PC-3 (cell line): ENCODE measurements at regions of chr11 and their contacts with region 1.

Region 1: GRCh38 chr11:57644748-57645688 is 4.7 kb downstream of the YPEL4 start:
- DNase-seq: peak; percentile 88
- ATAC-seq: peak; percentile 65
- H3K4me3 ChIP-seq: no peak overlapping the region
- H3K27ac ChIP-seq: no peak overlapping the region
- H3K4me1 ChIP-seq: peaks cover 15% of the 10 kb centered on the region
- H3K27me3 ChIP-seq: peaks cover 29% of the 10 kb centered on the region
- CTCF ChIP-seq: peak; percentile 96

Region 2: GRCh38 chr11:57402188-57403002 is 242.6 kb before region 1 on chr11:
- CTCF ChIA-PET with region 1: no interaction called
- POLR2A ChIA-PET with region 1: no interaction called
- intact Hi-C with region 1: no loop called
- DNase-seq: peak; percentile 96
- ATAC-seq: peak; percentile 56
- H3K4me3 ChIP-seq: no peak overlapping the region
- H3K27ac ChIP-seq: peak overlapping the region; percentile 78
- H3K4me1 ChIP-seq: peaks cover 55% of the 10 kb centered on the region
- H3K27me3 ChIP-seq: no peaks in the 10 kb centered on the region
- CTCF ChIP-seq: no peak

Region 3: GRCh38 chr11:57487021-57487778 is 157.8 kb before region 1 on chr11:
- CTCF ChIA-PET with region 1: no interaction called
- POLR2A ChIA-PET with region 1: interaction called, 10 read pairs
- intact Hi-C with region 1: no loop called
- DNase-seq: no peak
- ATAC-seq: no peak
- H3K4me3 ChIP-seq: no peak overlapping the region
- H3K27ac ChIP-seq: no peak overlapping the region
- H3K4me1 ChIP-seq: no peaks in the 10 kb centered on the region
- H3K27me3 ChIP-seq: no peaks in the 10 kb centered on the region
- CTCF ChIP-seq: no peak

Region 4: DNA sequence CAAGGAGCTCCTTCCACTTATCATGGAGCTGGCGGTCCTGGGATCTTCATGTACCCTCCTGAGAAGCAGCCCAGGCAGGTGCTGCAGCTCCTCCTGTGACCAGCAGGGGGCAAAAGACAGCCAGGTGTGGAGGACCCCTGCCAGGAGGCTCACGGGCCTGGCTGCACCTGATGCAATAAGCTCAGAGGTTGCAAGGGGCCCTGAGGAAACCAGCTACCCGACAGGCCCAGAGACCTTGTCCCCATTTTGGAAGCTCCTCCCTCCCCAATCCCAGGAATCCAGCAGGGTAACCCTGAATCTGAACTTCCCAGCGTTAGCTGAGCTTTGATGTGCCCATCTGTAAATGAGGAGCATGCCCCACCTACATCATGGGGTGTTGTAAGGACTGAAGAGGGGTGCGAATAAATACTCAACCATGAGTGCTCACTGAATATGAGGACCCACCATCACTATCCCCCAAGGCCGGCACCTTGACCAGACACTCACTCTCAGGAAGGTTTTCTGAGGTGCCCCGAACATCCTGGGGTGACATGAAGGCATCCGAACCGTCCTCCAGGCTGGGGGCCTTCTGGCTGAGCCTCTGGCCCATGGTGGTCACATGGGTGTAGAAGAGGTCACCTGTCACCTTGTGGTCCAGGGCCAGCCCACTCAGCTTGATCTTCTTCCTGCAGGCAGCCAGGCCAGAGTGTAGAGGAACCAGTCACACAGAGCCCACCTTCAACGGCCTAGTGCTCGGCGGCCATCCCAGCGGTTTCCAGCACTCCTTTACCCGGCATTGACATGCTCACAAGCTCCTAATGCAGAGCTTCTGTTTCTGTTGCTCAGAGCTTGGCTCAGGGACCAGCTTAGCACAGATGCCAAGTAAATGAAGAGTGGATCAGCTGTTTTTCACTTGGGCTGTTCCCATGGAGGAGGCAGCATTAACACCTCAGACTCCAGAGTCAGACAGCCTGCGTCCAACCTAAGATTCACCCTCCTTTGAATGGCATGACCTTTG is 151.2 kb before region 1 on chr11:
- CTCF ChIA-PET with region 1: interaction called, 12 read pairs
- POLR2A ChIA-PET with region 1: no interaction called
- intact Hi-C with region 1: no loop called
- DNase-seq: peak; percentile 85
- ATAC-seq: peak; percentile 79
- H3K4me3 ChIP-seq: no peak overlapping the region
- H3K27ac ChIP-seq: no peak overlapping the region
- H3K4me1 ChIP-seq: no peaks in the 10 kb centered on the region
- H3K27me3 ChIP-seq: no peaks in the 10 kb centered on the region
- CTCF ChIP-seq: peak; percentile 98

Region 5: GRCh38 chr11:57567515-57568329 is 77.3 kb before region 1 on chr11 and contains the start of gene UBE2L6:
- CTCF ChIA-PET with region 1: interaction called, 23 read pairs
- POLR2A ChIA-PET with region 1: no interaction called
- intact Hi-C with region 1: loop called (anchors 1 kb)
- DNase-seq: no peak
- ATAC-seq: peak; percentile 81
- H3K4me3 ChIP-seq: peak within 1 kb of the TSS; percentile 98
- H3K27ac ChIP-seq: no peak within 1 kb of the TSS
- H3K4me1 ChIP-seq: peaks cover 20% of the 10 kb centered on the region
- H3K27me3 ChIP-seq: no peaks in the 10 kb centered on the region
- CTCF ChIP-seq: no peak; the same call in 1 of the 2 replicates
- total RNA-seq, gene UBE2L6: 16.5 and 17.3 TPM in 2 replicates